Left ventricle myocardium inferior (tissue), 1 donor: ENCODE measurements at regions of chr1 and their contacts with region 1.

Region 1: GRCh38 chr1:108897865-108898720 is 21.3 kb downstream of the GPSM2 start:
- DNase-seq: no peak
- H3K4me3 ChIP-seq: no peak overlapping the region
- H3K27ac ChIP-seq: no peak overlapping the region
- H3K4me1 ChIP-seq: peaks cover 3% of the 10 kb centered on the region
- H3K27me3 ChIP-seq: no peaks in the 10 kb centered on the region
- CTCF ChIP-seq: peak; percentile 84

Region 2: GRCh38 chr1:108482708-108483107 is 415.4 kb before region 1 on chr1:
- intact Hi-C with region 1: no loop called
- DNase-seq: no peak
- H3K4me3 ChIP-seq: no peak overlapping the region
- H3K27ac ChIP-seq: no peak overlapping the region
- H3K4me1 ChIP-seq: no peaks in the 10 kb centered on the region
- H3K27me3 ChIP-seq: peaks cover 5% of the 10 kb centered on the region
- CTCF ChIP-seq: no peak

Region 3: DNA sequence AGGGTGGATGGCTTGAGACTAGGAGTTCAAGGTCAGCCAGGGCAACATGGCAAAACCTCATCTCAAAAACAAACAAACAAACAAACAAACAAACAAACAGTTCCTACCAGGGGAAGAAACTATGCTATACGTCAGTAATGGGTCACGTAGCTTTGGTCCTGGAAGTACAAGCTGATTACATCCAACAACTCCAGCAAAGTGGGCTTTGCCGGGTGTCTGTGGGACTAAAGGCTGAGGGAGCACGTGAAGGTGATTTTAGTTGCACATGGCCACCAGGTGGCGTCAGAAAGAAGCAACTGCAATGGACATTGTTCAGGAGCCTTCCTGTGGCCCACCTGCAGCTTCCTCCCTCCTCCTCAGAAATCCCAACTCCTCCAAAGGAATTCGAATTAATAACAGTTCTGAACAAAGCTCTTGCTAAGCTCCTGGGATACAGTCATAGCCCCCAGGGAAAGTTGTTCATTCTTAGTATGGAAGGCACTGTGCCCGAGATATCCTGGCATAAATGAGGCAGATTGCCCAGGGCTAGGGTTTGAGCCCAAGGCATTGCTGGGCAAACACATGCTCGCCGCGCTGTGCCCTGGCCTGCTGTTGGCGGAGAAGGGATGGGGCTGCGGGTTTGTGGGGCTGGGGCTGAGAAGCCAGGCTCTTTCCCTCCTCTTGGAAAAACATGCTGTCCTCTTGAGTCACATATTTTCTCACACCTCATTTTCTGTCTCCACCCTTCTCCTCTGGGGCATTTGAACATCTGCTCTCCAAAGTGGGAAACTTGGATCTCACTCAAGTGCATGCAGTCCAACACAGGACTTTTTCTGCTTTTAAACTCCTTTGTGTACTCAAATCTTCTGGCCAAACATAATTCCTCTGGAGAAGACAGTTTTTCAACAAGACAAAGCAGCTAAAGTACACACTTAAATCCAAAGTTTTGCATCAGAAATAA is 69.8 kb before region 1 on chr1:
- intact Hi-C with region 1: loop called (anchors 5 kb)
- DNase-seq: peak; percentile 70
- H3K4me3 ChIP-seq: no peak overlapping the region
- H3K27ac ChIP-seq: peak overlapping the region; percentile 81
- H3K4me1 ChIP-seq: peaks cover 39% of the 10 kb centered on the region
- H3K27me3 ChIP-seq: no peaks in the 10 kb centered on the region
- CTCF ChIP-seq: peak; percentile 81